Adrenal gland (tissue), 19 donors: ENCODE measurements at regions of chr1 and their contacts with region 1.

Region 1: GRCh38 chr1:64823691-64824476 is 79.0 kb downstream of the RAVER2 start:
- DNase-seq: peak; percentile 62 to 92 (median 77)
- H3K4me3 ChIP-seq: no peak overlapping the region
- H3K27ac ChIP-seq: no peak overlapping the region
- H3K4me1 ChIP-seq: no peaks in the 10 kb centered on the region
- H3K27me3 ChIP-seq: no peaks in the 10 kb centered on the region
- CTCF ChIP-seq: peak; percentile 72 to 94 (median 88)
- POLR2A ChIP-seq: no peak

Region 2: DNA sequence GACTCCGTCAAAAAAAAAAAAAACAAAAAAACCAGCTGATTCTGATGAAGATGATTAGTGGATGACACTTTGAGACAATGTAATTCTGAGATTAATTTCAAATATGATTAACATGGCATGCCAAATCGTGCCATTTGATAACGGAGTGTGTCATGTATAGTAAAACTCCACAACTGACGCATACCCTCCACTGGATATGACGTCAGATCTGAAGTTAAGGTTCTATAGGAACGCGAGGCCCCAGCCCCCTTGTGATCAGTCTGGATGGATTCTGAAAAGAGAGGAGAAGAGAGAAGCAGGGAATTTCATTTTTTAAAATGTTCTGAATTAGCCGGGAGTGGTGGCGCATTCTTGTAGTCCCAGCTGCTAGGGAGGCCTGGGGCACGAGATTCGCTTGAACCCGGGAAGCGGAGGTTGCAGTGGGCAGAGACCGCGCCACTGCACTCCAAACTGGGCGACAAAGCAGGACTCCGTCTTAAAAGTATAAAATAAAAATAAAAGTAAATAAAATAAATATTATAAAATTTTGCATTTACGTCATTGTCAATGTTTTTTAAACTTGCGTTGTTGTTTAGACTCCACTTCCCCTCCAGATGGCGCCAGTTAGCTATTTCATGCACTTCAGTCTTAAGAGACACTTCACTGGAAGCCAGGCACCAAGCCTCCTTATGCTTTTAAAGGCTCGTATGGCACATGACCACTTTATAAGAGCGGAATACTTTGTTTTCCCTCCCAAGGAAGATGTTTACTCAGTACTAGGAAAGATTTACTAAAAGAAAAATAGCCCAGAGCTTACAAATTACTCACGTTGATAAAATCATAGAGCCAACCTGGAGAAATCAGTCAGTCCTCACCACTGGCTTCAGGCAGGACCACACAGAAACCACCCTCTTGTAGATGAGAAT is 555.0 kb before region 1 on chr1:
- intact Hi-C with region 1: loop called in 1 of 2 experiments (anchors 5 kb)
- DNase-seq: peak; percentile 65 to 86 (median 81)
- H3K4me3 ChIP-seq: no peak overlapping the region
- H3K27ac ChIP-seq: no peak overlapping the region
- H3K4me1 ChIP-seq: no peaks in the 10 kb centered on the region
- H3K27me3 ChIP-seq: no peaks in the 10 kb centered on the region
- CTCF ChIP-seq: peak; percentile 62 to 83 (median 74)
- POLR2A ChIP-seq: no peak

Region 3: GRCh38 chr1:64378826-64379225 is 445.1 kb before region 1 on chr1:
- intact Hi-C with region 1: loop called in 1 of 2 experiments (anchors 5 kb)
- DNase-seq: peak in 5 of 7 donors; percentile 13 to 52 (median 36)
- H3K4me3 ChIP-seq: no peak overlapping the region
- H3K27ac ChIP-seq: no peak overlapping the region
- H3K4me1 ChIP-seq: no peaks in the 10 kb centered on the region
- H3K27me3 ChIP-seq: no peaks in the 10 kb centered on the region
- CTCF ChIP-seq: peak; percentile 26 to 69 (median 60)
- POLR2A ChIP-seq: no peak

Region 4: DNA sequence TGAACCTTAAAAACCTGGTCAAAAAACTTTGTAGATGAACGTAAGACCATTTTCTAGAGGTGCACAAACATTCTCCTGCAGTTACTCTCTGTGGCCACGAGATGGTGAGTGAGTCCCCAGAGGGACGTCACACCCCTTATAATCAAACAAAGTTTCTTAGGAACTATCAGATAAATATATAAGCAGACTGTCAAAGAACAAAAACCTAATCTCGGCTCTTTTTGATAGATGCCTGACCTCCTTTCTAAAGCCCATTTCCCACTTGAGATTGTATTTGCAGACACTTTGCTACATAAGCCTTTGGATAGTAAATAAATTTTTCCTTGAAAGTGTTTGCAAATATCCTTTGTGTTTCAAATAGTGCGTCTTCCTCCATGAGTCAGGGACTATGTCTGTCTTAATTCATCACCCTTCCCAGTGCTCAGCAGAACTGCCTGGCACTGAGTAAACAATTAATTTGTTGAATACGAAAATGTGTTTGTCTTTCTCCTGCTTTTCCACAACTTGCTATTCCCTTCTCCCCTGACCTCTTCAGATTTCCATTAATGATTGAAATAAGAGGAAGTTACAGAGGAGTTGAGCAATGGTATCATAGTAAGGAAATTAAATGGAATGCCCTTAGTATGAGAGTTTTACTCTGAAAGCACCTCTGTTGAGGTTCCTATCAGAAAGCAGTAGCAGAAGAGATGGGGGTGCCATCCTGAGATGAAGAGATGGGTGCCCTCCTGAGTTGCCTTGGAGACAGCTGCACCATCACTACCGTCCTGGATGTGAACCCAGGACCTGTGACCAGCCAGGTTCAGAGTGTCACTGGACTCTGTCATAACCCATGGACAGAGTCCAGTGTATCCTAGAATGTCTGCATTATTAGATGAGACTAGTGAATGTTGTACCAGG is 136.8 kb before region 1 on chr1:
- intact Hi-C with region 1: loop called (anchors 5 to 10 kb)
- DNase-seq: peak; percentile 27 to 64 (median 46)
- H3K4me3 ChIP-seq: no peak overlapping the region
- H3K27ac ChIP-seq: peak overlapping the region in 1 of 5 donors; percentile 50
- H3K4me1 ChIP-seq: peaks cover 0 to 14% of the 10 kb centered on the region in 2 donors
- H3K27me3 ChIP-seq: no peaks in the 10 kb centered on the region
- CTCF ChIP-seq: peak; percentile 77 to 90 (median 85)
- POLR2A ChIP-seq: no peak

Region 5: GRCh38 chr1:64744492-64745180 is 79.2 kb before region 1 on chr1 and contains the start of gene RAVER2:
- intact Hi-C with region 1: loop called (anchors 10 kb)
- DNase-seq: peak; percentile 75 to 82 (median 79)
- H3K4me3 ChIP-seq: peak within 1 kb of the TSS; percentile 57 to 97 (median 80)
- H3K27ac ChIP-seq: peak within 1 kb of the TSS; percentile 46 to 86 (median 77)
- H3K4me1 ChIP-seq: peaks cover 9 to 33% of the 10 kb centered on the region in 2 donors
- H3K27me3 ChIP-seq: no peaks in the 10 kb centered on the region
- CTCF ChIP-seq: peak in 5 of 6 experiments; percentile 23 to 45 (median 34)
- POLR2A ChIP-seq: peak in 1 of 2 donors; percentile 38
- total RNA-seq, gene RAVER2: 8.8 to 19.0 (median 12.4) TPM